ENCODE measurements at regions of chr2 and their contacts with region 1.

Region 1: GRCh38 chr2:206159346-206160124 is at the starts of genes EEF1B2 and NDUFS1:
- DNase-seq: peak; percentile 96 to 98
- H3K4me3 ChIP-seq: peak within 1 kb of the TSS; percentile 94 to 96
- H3K27ac ChIP-seq: peak within 1 kb of the TSS; percentile 92 to 96
- H3K4me1 ChIP-seq: peaks cover 0 to 50% (median 21%) of the 10 kb centered on the region in 4 donors
- H3K27me3 ChIP-seq: no peaks in the 10 kb centered on the region
- CTCF ChIP-seq: no peak

Region 2: GRCh38 chr2:206176121-206176520 is 16.6 kb after region 1 on chr2:
- intact Hi-C with region 1: no loop called
- DNase-seq: no peak
- H3K4me3 ChIP-seq: no peak overlapping the region
- H3K27ac ChIP-seq: no peak overlapping the region
- H3K4me1 ChIP-seq: no peaks in the 10 kb centered on the region
- H3K27me3 ChIP-seq: no peaks in the 10 kb centered on the region
- CTCF ChIP-seq: no peak

Region 3: DNA sequence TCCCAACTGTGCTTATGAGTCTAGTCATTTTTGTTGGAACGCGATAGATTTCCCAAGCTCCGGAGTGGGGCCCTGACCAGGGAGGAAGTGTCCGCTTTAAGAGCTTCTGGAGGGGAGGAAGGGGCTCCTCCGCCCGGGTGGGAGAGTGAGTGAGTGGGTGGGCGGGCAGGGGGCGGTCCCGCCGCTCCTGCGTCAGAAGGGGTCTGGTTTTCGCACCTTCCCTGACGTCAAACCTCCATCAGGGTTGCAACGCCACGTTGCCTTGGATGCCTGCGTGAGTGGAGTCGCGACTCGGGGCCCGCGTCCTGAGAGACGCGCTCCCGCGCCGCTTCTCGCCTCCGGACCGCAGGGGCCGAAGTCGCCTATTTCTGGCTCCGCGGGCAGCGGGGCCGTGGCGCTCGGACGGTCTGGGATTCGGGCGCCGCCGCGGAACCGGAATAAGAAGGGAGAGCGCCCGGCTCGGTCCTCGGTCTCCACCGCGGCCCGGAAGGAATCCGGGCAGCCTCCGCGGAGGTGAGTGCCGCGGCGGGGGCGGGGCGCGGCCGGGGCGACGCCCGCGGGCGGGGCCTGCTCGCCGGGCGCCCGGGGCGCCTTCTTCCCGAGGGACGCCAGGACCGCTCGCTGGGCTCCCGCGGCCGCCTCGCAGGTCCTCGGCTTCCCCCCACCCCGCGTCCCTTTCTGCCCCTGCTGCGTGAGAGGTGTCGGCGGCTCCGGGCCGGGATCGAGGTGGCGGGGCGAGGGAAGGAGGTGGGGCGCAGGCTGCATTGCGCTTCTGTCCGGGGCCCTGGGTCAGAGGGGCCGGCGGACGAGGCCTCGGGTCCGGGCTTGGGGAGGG is 115.1 kb after region 1 on chr2 and contains the start of gene ZDBF2:
- intact Hi-C with region 1: loop called (anchors 5 kb)
- DNase-seq: peak in 1 of 2 donors; percentile 69
- H3K4me3 ChIP-seq: peak within 1 kb of the TSS; percentile 61 to 86
- H3K27ac ChIP-seq: peak within 1 kb of the TSS; percentile 67 to 87
- H3K4me1 ChIP-seq: peaks cover 0 to 22% (median 3%) of the 10 kb centered on the region in 4 donors
- H3K27me3 ChIP-seq: peaks cover 0 to 62% of the 10 kb centered on the region in 2 donors
- CTCF ChIP-seq: no peak

Region 4: GRCh38 chr2:206378835-206379234 is 219.3 kb after region 1 on chr2:
- intact Hi-C with region 1: no loop called
- DNase-seq: no peak
- H3K4me3 ChIP-seq: no peak overlapping the region
- H3K27ac ChIP-seq: no peak overlapping the region
- H3K4me1 ChIP-seq: no peaks in the 10 kb centered on the region
- H3K27me3 ChIP-seq: no peaks in the 10 kb centered on the region
- CTCF ChIP-seq: no peak